ENCODE measurements at regions of chr13 and their contacts with region 1.

Region 1: GRCh38 chr13:113398963-113399661 is 35.2 kb upstream of the GRTP1 start:
- DNase-seq: peak; percentile 16
- H3K4me3 ChIP-seq: no peak overlapping the region
- CTCF ChIP-seq: no peak

Region 2: GRCh38 chr13:113208424-113209335 is 190.4 kb before region 1 on chr13 and contains the start of gene PCID2:
- CTCF ChIA-PET with region 1: no interaction called
- POLR2A ChIA-PET with region 1: no interaction called
- DNase-seq: peak; percentile 14
- H3K4me3 ChIP-seq: peak within 1 kb of the TSS; percentile 76
- CTCF ChIP-seq: peak; percentile 3

Region 3: DNA sequence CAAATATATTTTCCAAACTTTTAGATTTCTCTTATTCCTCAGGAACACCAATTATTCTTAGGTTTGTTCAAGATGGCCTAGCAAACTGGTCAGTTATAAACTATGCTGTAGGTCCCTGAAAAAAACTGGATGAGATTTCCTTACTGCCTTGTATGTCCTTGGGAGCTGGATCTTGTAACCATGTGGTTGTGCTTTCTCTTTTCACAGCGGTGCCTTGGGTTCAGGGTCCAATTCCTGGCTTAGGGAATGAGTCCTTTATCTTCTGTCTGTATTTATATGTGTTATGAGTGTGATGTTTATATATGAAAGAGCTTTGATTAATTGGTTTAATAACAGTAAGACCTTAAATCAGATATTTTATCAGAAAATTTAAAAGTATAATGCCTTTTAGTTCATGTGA is 11.7 kb before region 1 on chr13:
- CTCF ChIA-PET with region 1: interaction called, 10 read pairs
- POLR2A ChIA-PET with region 1: no interaction called
- DNase-seq: no peak
- H3K4me3 ChIP-seq: no peak overlapping the region
- CTCF ChIP-seq: no peak